GM13977 (cell line): ENCODE measurements at regions of chr4 and their contacts with region 1.

Region 1: GRCh38 chr4:147096667-147097604 is 151.3 kb upstream of the TTC29 start:
- DNase-seq: peak; percentile 35
- CTCF ChIP-seq: peak; percentile 61

Region 2: GRCh38 chr4:146342600-146343192 is 754.2 kb before region 1 on chr4:
- in situ Hi-C with region 1: loop called (anchors 25 kb)
- DNase-seq: peak; percentile 21
- CTCF ChIP-seq: peak; percentile 39